Activated CD8-positive, alpha-beta T cell treated with anti-CD3 and anti-CD28 coated beads for 36 hours (primary cell): ENCODE measurements at regions of chr17 and their contacts with region 1.

Region 1: GRCh38 chr17:58699766-58700165 is 7.4 kb downstream of the RAD51C start:
- DNase-seq: no peak
- ATAC-seq: no peak
- H3K4me3 Mint-ChIP-seq: no peak overlapping the region
- H3K27ac Mint-ChIP-seq: no peak overlapping the region
- H3K4me1 Mint-ChIP-seq: peaks cover 9% of the 10 kb centered on the region
- H3K27me3 Mint-ChIP-seq: no peaks in the 10 kb centered on the region
- CTCF ChIP-seq: no peak

Region 2: GRCh38 chr17:58710936-58711775 is 11.4 kb after region 1 on chr17:
- CTCF ChIA-PET with region 1: interaction called, 10 read pairs
- POLR2A ChIA-PET with region 1: interaction called, 3 read pairs
- intact Hi-C with region 1: no loop called
- DNase-seq: peak; percentile 61
- ATAC-seq: no peak
- H3K4me3 Mint-ChIP-seq: no peak overlapping the region
- H3K27ac Mint-ChIP-seq: no peak overlapping the region
- H3K4me1 Mint-ChIP-seq: peaks cover 10% of the 10 kb centered on the region
- H3K27me3 Mint-ChIP-seq: no peaks in the 10 kb centered on the region
- CTCF ChIP-seq: peak; percentile 87

Region 3: GRCh38 chr17:58786613-58787295 is 87.0 kb after region 1 on chr17:
- CTCF ChIA-PET with region 1: no interaction called
- POLR2A ChIA-PET with region 1: no interaction called
- intact Hi-C with region 1: no loop called
- DNase-seq: no peak
- ATAC-seq: no peak
- H3K4me3 Mint-ChIP-seq: no peak overlapping the region
- H3K27ac Mint-ChIP-seq: no peak overlapping the region
- H3K4me1 Mint-ChIP-seq: peaks cover 9% of the 10 kb centered on the region
- H3K27me3 Mint-ChIP-seq: peaks cover 4% of the 10 kb centered on the region
- CTCF ChIP-seq: no peak